ENCODE measurements at regions of chr2 and their contacts with region 1.

Region 1: DNA sequence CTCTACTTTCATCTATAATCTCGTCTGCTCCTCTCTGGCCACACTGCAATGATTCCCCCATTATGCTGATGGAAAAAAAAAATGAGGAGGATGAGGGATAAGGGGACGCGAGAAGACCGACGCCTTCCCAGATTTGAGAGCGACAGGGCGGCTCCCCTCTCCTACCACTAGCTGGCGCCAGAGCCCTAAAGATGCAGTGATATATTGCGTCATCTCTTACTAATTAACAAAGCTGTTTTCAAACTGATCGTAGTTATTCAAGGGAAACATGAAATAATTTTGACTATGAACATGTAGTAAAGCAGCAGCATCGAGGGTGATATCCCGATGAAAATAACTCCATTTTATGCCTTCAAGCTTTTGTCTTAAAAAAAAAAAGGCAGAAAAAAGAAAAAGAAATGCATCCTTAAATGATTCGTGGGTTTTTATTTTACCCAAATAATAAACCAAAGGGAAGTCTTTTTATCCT is 48.0 kb upstream of the HNRNPA3 start:
- DNase-seq: peak; percentile 92
- H3K4me3 ChIP-seq: peak overlapping the region in 1 of 3 experiments; percentile 26
- H3K27ac ChIP-seq: peak overlapping the region; percentile 91
- H3K4me1 ChIP-seq: peaks cover 51% of the 10 kb centered on the region
- H3K27me3 ChIP-seq: no peaks in the 10 kb centered on the region
- CTCF ChIP-seq: peak; percentile 99 to 100
- POLR2A ChIP-seq: no peak

Region 2: DNA sequence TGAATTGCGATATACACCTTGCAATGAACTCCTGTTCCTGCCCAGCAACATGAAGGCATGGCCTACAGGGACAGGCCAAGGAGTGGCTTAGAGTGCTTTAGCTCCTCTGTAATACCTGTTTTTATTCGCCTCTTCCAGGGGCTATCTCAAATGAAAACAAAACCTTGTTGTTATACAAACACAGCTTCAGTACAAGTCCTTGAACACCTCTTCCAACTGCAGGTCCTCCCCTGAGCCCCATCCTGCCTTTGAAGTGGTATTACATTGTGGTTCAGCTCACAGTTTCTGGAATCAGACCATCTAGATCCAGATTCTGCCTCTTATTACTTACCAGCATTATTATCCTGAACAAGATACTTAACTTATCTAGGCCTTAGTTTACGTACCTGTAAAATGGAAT is 35.0 kb before region 1 on chr2:
- CTCF ChIA-PET with region 1: no interaction called
- POLR2A ChIA-PET with region 1: no interaction called
- dilution Hi-C with region 1: no loop called
- intact Hi-C with region 1: no loop called
- DNase-seq: no peak
- H3K4me3 ChIP-seq: no peak overlapping the region
- H3K27ac ChIP-seq: no peak overlapping the region
- H3K4me1 ChIP-seq: no peaks in the 10 kb centered on the region
- H3K27me3 ChIP-seq: peaks cover 0 to 3% of the 10 kb centered on the region in 2 experiments
- CTCF ChIP-seq: no peak
- POLR2A ChIP-seq: no peak

Region 3: GRCh38 chr2:177148477-177149154 is 16.0 kb before region 1 on chr2:
- CTCF ChIA-PET with region 1: interaction called, 64 read pairs
- POLR2A ChIA-PET with region 1: no interaction called
- dilution Hi-C with region 1: no loop called
- intact Hi-C with region 1: no loop called
- DNase-seq: peak; percentile 85
- H3K4me3 ChIP-seq: peak overlapping the region in 2 of 3 experiments; percentile 29 to 62
- H3K27ac ChIP-seq: no peak overlapping the region
- H3K4me1 ChIP-seq: peaks cover 10% of the 10 kb centered on the region
- H3K27me3 ChIP-seq: peaks cover 9% of the 10 kb centered on the region in 2 experiments
- CTCF ChIP-seq: peak; percentile 87 to 89
- POLR2A ChIP-seq: no peak

Region 4: DNA sequence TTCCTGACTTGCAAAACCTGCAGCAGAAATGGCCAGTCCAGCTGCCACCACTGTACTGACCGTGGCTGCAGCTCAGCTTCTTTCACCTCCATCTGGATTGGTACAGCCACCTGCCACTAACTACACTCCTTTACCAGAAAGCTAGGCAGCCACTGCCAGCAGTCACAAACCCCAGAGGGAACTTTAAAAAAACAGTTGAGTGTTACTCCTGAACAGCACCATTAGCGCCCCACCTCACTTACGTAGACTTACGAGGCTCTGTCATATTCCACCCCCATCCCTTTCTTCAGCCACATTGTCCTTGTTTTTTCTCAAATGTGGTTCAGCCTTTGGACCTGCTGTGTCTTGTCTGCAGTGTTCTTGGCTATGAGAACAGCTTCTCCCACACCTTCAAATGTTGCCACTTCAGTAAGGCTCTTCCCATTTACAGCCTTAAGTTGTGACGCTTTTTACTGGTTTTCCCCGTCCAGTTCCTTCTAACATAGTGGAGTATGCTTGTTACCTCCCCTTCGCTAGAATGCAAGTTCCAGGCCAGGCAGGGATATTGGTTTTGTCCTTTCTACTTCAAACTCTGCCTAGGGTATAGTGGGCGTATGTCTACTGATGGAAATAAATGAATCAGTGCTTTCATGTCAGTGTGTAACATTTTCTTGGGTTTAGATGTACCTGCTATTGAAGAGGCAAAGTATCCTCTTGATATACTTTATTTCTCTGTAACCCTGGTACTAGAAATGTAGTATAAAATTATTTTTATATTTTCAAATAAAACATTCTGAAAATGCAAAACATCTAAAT is 65.0 kb after region 1 on chr2:
- CTCF ChIA-PET with region 1: interaction called, 98 read pairs
- POLR2A ChIA-PET with region 1: no interaction called
- dilution Hi-C with region 1: no loop called
- intact Hi-C with region 1: no loop called
- DNase-seq: no peak
- H3K4me3 ChIP-seq: no peak overlapping the region
- H3K27ac ChIP-seq: no peak overlapping the region
- H3K4me1 ChIP-seq: no peaks in the 10 kb centered on the region
- H3K27me3 ChIP-seq: no peaks in the 10 kb centered on the region
- CTCF ChIP-seq: no peak
- POLR2A ChIP-seq: no peak

Region 5: GRCh38 chr2:177296040-177296439 is 131.4 kb after region 1 on chr2:
- CTCF ChIA-PET with region 1: interaction called, 46 read pairs
- POLR2A ChIA-PET with region 1: no interaction called
- dilution Hi-C with region 1: no loop called
- intact Hi-C with region 1: loop called (anchors 1 kb)
- DNase-seq: peak; percentile 67
- H3K4me3 ChIP-seq: no peak overlapping the region
- H3K27ac ChIP-seq: no peak overlapping the region
- H3K4me1 ChIP-seq: no peaks in the 10 kb centered on the region
- H3K27me3 ChIP-seq: no peaks in the 10 kb centered on the region
- CTCF ChIP-seq: peak; percentile 2 to 33
- POLR2A ChIP-seq: no peak

Region 6: DNA sequence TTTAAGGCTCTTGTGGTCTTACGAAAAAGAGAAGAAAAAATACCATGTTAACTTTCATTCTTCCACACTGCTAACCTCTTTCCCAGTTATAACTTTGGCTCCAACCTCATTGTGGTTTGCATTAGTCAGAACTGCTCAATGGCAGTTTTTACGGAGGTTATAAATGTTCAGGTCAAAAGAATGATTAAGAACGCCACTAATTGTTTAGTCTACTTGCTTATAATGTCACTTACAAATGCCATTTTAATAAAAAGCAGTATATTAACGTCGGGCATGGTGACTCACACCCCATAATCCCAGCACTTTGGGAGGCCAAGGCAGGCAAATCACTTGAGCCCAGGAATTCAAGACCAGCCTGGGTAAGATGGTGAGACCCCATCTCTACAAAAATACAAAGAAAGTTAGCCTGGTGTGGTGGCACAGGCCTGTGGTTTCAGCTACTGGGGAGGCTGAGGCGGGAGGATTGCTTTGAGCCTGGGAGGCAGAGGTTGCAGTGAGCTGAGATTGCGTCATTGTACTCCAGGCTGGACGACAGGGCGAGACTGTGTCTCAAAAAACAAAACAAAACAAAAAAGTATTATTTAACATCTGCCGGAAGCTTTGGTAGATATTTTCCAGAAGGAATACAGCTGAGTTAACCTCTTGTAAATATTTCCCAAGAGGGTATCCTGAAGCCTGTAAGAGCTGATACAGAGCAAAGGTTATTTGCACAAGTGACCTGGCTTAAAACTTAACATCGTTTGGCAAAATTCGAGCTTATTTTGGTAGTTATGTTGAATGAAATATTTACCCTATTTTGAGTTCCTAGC is 233.1 kb after region 1 on chr2:
- CTCF ChIA-PET with region 1: interaction called, 17 read pairs
- POLR2A ChIA-PET with region 1: no interaction called
- dilution Hi-C with region 1: loop called (anchors 10 kb)
- intact Hi-C with region 1: loop called (anchors 2 kb)
- DNase-seq: peak; percentile 65
- H3K4me3 ChIP-seq: no peak overlapping the region
- H3K27ac ChIP-seq: peak overlapping the region; percentile 82
- H3K4me1 ChIP-seq: peaks cover 76% of the 10 kb centered on the region
- H3K27me3 ChIP-seq: no peaks in the 10 kb centered on the region
- CTCF ChIP-seq: no peak
- POLR2A ChIP-seq: no peak

Region 7: DNA sequence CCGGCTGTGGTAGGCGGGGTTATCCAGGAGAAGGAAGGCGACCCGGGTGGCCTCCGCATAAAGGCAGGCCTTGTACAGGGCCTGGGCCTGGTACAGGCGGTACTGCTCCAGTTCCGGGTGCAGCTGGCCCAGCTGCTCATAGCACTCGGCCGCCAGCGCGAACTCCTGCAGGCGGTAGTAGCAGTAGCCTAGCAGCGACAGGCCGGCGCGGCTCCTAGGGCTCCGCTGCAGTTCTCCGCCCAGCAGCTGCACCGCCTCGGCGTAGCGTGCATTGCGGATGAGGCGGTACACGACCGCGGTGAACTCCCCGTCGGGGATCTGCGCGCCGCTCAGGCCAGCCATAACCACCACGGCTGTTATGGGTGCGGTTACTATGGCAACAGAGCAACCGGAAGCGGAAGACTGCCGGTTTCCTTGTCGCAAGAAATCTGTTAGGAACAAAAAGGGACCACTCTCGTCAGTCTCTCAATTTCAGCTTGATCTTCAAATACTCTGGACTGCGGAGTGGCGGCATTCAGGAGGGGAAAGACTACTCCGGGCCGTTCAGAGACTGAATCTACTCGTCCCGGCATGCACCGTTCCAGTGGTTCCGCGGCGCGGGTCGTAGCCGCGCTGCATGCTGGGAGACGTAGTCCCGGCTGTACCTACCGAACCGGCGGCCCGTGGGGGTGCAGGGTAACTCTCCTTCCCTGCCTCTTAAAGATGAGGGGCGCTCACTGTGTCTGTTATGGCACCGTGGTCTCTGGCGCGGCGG is 388.0 kb after region 1 on chr2:
- CTCF ChIA-PET with region 1: no interaction called
- POLR2A ChIA-PET with region 1: no interaction called
- dilution Hi-C with region 1: no loop called
- intact Hi-C with region 1: loop called (anchors 10 kb)
- DNase-seq: peak; percentile 90
- H3K4me3 ChIP-seq: peak overlapping the region; percentile 57 to 93 (median 84)
- H3K27ac ChIP-seq: peak overlapping the region; percentile 91
- H3K4me1 ChIP-seq: peaks cover 41% of the 10 kb centered on the region
- H3K27me3 ChIP-seq: no peaks in the 10 kb centered on the region
- CTCF ChIP-seq: no peak
- POLR2A ChIP-seq: peak; percentile 47

Region 8: DNA sequence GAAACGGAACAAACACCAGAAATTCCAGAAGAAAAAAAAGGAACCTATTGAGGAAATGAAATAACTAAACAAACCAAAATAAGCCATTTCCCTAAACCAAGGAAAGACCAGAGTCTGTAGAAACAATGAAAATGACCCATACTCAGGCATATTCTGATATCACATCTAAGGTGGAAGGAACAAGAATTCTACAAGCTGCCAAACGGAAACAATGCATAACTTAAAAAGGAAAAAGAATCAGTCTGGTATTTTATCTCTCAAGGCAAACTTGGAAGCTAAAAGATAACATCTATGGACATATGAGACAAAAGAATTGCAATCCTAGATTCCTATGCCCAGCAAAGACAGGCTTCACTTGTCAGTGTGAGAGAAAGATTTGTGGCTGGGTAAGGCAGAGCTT is 581.7 kb after region 1 on chr2:
- CTCF ChIA-PET with region 1: interaction called, 10 read pairs
- POLR2A ChIA-PET with region 1: no interaction called
- dilution Hi-C with region 1: no loop called
- intact Hi-C with region 1: no loop called
- DNase-seq: peak; percentile 77
- H3K4me3 ChIP-seq: no peak overlapping the region
- H3K27ac ChIP-seq: peak overlapping the region; percentile 63
- H3K4me1 ChIP-seq: peaks cover 36% of the 10 kb centered on the region
- H3K27me3 ChIP-seq: no peaks in the 10 kb centered on the region
- CTCF ChIP-seq: no peak
- POLR2A ChIP-seq: no peak

Measured in endothelial cell of umbilical vein (primary cell).